PC-3 (cell line): ENCODE measurements at regions of chr5 and their contacts with region 1.

Region 1: DNA sequence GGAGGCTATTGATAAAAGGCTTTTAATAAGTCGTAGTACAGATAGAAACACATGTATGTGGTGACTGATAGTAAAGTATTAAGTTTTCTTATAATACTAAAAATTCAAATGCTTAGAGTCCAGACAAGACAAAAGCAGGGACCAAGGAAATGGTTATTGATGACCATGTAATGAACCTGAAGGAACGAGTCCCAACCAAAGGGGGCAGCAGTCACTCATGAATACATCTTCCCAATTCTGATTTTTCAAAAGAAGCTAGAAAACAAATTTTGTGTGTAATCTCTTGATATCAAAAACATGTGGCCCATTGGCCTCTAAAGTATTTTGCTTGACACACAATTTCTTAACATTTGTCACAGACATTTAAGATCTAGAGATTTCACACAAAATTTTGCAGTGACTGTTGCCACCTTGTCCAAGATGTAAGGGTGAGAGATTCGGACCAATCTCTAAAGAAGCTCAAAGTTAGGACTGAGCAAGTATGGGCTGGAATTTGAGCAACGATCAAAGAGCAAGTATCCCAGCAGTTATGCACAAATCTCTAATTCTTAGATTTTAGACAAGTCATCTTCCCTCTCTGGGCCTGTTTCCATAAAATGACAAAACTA is 66.8 kb downstream of the ARL15 start:
- DNase-seq: peak; percentile 48
- ATAC-seq: no peak
- H3K4me3 ChIP-seq: no peak overlapping the region
- H3K27ac ChIP-seq: no peak overlapping the region
- H3K4me1 ChIP-seq: no peaks in the 10 kb centered on the region
- H3K27me3 ChIP-seq: no peaks in the 10 kb centered on the region
- CTCF ChIP-seq: peak; percentile 71

Region 2: DNA sequence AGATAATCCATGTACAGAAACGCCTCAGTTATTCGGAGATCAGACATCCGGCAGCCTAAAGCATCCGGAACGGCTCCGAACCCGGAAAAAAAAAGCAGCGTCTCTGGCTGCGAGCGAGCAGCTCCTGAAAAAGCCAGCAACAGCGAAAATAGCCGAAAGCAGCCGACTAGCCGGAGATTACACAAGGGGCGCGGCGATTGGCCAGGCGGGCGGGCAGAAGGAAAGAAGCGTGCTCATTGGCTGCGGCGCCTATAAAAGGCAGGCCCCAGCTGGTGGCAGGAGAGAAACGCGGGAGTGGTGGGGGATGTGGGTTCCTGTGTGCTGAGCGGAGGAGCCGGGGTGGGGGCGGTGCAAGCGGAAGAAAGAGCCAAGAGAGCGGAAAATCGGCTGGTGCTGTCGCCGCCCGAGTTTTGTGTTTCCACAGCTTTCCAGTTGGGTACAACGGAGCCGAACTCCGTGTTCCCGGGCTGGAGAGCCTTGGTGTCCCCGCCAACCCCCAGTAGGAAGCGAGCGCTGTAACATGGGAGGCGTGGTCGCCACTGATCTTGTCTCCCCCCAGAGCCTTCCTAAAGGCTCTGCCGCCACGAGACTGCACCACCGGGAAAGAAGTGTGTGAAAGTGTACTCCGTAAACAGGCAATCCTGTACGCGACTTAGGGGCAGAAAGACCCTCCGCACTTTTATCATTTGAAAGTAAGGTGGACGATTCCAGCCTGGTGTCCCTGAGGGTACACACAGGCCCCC is 67.0 kb after region 1 on chr5 and contains the start of gene ARL15:
- CTCF ChIA-PET with region 1: interaction called, 6 read pairs
- POLR2A ChIA-PET with region 1: no interaction called
- intact Hi-C with region 1: loop called (anchors 2 kb)
- DNase-seq: peak; percentile 89
- ATAC-seq: peak; percentile 87
- H3K4me3 ChIP-seq: peak within 1 kb of the TSS; percentile 95
- H3K27ac ChIP-seq: no peak within 1 kb of the TSS
- H3K4me1 ChIP-seq: peaks cover 9% of the 10 kb centered on the region; the same call in 1 of the 2 replicates
- H3K27me3 ChIP-seq: no peaks in the 10 kb centered on the region
- CTCF ChIP-seq: no peak
- total RNA-seq, gene ARL15: 6.0 and 6.9 TPM in 2 replicates

Region 3: DNA sequence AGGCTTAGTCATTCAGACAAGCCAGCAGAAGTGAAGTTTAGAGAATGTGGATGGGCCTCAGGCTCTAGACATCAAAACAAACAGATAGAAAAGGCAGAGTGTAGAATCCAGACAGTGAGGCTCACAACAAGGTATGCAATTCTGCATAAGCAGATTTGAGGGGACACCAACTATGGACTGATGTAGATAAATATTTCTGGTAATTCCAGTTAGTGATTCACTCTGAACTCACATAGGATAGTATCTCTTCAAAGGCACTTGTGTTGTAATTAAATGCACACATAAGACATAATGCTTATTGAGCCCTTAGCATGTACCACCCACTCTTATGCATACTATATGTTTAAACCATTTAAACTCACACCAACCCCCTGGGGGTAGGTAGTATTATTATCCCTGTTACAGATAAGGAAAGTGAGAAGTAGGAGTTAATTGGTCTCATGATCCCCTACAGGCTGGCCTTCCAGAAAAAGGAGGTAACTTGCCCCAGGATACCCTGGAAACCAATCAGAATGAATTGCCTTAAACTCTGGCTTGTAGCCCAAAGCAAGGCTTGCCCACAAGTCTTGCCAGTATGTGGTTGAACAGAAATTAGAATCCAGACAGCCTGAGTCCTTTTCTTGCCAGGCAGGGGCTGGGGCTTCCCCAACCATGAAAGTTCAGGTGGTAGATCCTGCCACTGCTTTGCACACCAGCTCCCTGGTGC is 172.5 kb after region 1 on chr5:
- CTCF ChIA-PET with region 1: interaction called, 17 read pairs
- POLR2A ChIA-PET with region 1: no interaction called
- intact Hi-C with region 1: loop called (anchors 1 kb)
- DNase-seq: peak; percentile 77
- ATAC-seq: peak; percentile 51
- H3K4me3 ChIP-seq: no peak overlapping the region
- H3K27ac ChIP-seq: no peak overlapping the region
- H3K4me1 ChIP-seq: peaks cover 7% of the 10 kb centered on the region; the same call in 1 of the 2 replicates
- H3K27me3 ChIP-seq: no peaks in the 10 kb centered on the region
- CTCF ChIP-seq: no peak

Region 4: GRCh38 chr5:54421976-54422375 is 178.4 kb after region 1 on chr5:
- CTCF ChIA-PET with region 1: interaction called, 17 read pairs
- POLR2A ChIA-PET with region 1: no interaction called
- intact Hi-C with region 1: loop called (anchors 1 kb)
- DNase-seq: no peak
- ATAC-seq: no peak
- H3K4me3 ChIP-seq: no peak overlapping the region
- H3K27ac ChIP-seq: no peak overlapping the region
- H3K4me1 ChIP-seq: no peaks in the 10 kb centered on the region
- H3K27me3 ChIP-seq: peaks cover 3% of the 10 kb centered on the region; the same call in 1 of the 2 replicates
- CTCF ChIP-seq: no peak

Region 5: GRCh38 chr5:54492178-54492577 is 248.6 kb after region 1 on chr5:
- CTCF ChIA-PET with region 1: interaction called, 6 read pairs
- POLR2A ChIA-PET with region 1: no interaction called
- intact Hi-C with region 1: loop called (anchors 1 kb)
- DNase-seq: no peak
- ATAC-seq: no peak
- H3K4me3 ChIP-seq: no peak overlapping the region
- H3K27ac ChIP-seq: no peak overlapping the region
- H3K4me1 ChIP-seq: no peaks in the 10 kb centered on the region
- H3K27me3 ChIP-seq: no peaks in the 10 kb centered on the region
- CTCF ChIP-seq: no peak

Region 6: DNA sequence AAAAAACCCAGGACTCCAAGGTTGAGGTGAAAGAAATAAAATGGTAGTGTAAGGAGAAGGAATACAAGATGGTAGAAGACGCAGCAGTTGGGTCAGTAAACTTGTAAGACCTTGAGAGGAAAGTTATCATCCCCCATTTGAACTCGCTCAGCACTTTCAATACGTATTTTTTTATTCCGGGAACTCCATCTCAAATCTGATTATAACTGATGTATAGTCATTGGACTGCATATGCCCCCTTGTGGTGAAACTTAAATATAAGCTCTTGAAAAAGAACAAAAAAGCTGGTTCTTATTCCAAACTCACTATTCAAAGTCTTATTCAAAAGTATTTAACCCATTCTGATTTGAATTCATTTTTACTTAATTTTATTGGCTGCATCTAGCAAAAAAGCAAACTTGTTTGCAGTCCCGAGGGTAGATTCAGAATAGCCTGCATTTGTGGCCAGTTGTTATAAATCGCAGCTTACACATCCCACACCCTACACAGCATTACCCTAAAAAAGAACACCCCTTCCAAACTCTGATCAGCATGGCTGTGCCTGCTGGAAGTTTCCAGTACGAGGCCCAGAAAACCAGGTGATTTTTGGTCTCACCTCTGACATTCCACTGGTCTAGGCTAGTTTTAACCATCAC is 623.9 kb after region 1 on chr5:
- CTCF ChIA-PET with region 1: interaction called, 11 read pairs
- POLR2A ChIA-PET with region 1: no interaction called
- intact Hi-C with region 1: no loop called
- DNase-seq: peak; percentile 59
- ATAC-seq: no peak; the same call in 1 of the 2 replicates
- H3K4me3 ChIP-seq: peak overlapping the region; percentile 18; the same call in 1 of the 2 replicates
- H3K27ac ChIP-seq: no peak overlapping the region
- H3K4me1 ChIP-seq: no peaks in the 10 kb centered on the region
- H3K27me3 ChIP-seq: peaks cover 17% of the 10 kb centered on the region; the same call in 1 of the 2 replicates
- CTCF ChIP-seq: peak; percentile 60

Region 7: DNA sequence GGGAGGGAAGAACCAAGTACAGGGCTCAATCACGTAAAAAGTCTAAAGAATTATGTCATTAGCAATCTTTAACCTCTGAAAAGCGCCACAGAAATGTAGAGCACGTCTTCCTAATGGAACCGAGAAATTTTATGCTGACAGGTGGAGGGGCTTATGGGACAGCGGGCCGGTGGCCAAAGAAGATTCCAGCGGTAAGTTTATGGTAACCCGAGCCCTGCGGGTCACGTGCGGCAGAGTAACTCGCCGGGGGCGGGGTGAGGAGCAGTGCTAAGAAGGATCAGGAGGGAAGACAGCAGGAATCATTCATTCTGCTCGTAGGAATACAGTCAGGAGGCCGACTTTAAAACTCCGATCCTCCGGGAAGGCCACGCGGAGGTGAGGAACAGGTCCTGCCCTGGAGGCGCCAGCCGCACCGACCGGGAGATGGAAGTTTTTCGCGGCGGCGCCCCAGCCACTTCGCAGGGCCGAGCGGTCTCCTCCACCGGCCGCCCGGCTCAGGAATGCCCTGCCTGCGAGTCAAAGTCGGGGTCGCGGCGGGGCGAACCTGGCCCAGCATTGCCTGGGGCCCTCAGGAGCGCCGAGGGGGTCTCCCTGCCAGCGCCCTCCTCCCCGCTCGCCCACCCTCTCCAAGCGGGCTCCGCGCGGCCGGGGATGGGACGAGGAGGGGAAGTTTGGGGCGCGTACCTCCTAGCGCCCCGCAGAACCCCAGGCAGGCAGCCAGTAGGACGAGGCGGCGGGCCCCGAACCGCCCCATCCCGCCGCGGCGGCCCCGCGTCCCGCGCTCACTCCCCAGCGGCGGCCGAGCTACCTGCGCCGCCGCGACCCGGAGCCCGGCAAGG is 640.0 kb after region 1 on chr5:
- CTCF ChIA-PET with region 1: no interaction called
- POLR2A ChIA-PET with region 1: no interaction called
- intact Hi-C with region 1: no loop called
- DNase-seq: no peak
- ATAC-seq: no peak
- H3K4me3 ChIP-seq: no peak overlapping the region
- H3K27ac ChIP-seq: no peak overlapping the region
- H3K4me1 ChIP-seq: peaks cover 6% of the 10 kb centered on the region
- H3K27me3 ChIP-seq: no peaks in the 10 kb centered on the region
- CTCF ChIP-seq: no peak